ENCODE measurements at regions of chr6 and their contacts with region 1.

Region 1: DNA sequence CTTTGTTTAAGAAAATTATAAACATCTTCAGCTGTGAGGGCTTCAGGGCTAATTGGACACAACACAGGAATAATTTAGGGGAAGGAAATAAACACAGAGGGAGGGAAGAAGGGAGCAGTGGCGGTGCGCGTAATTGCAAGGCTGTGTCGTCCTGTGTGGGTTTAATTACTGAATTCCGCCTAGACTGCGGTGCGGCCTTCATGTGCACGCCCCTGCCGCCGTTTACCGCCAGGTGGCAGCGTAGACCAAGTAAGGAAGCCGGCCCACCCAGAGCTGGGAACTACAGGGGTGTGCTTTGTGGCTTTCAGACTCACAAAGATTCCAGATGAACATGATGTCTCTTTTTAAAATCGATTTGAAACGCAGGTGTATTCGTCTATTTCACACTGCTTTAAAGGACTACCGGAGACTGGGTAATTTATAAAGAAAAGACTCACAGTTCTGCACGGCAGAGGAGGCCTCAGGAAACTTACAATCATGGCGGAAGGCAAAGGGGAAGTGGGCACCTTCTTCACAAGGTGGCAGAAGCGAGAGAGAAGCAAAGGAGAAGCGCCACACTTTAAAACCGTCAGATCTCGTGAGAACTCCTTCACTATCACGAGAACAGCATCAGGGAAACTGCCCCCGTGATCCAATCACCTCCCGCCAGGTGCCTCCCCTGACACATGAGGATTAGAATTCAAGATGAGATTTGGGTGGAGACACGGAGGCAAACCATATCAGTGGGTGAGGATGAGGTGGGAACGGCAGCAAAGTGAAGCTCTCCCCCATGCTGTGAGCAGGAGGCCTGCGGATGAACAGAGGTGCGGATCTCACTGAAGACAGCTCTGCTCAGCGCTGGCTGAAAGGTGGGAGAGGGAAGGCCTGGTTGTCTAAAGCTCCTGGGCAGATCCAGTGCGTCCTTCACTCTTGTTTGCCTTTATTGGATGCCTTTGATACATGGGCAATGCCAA is 222.0 kb upstream of the PDE10A start:
- DNase-seq: peak; percentile 81 to 89 (median 89)
- H3K4me3 ChIP-seq: peak overlapping the region in 2 of 7 experiments; percentile 2 to 43
- H3K27ac ChIP-seq: no peak overlapping the region
- H3K4me1 ChIP-seq: peaks cover 0 to 4% (median 0%) of the 10 kb centered on the region in 4 experiments
- H3K27me3 ChIP-seq: peaks cover 0 to 15% (median 3%) of the 10 kb centered on the region in 5 experiments

Region 2: GRCh38 chr6:165872311-165872710 is 12.8 kb before region 1 on chr6:
- CTCF ChIA-PET with region 1: no interaction called
- POLR2A ChIA-PET with region 1: no interaction called
- DNase-seq: no peak
- H3K4me3 ChIP-seq: no peak overlapping the region
- H3K27ac ChIP-seq: no peak overlapping the region
- H3K4me1 ChIP-seq: no peaks in the 10 kb centered on the region
- H3K27me3 ChIP-seq: peaks cover 11 to 51% (median 17%) of the 10 kb centered on the region in 5 experiments

Region 3: DNA sequence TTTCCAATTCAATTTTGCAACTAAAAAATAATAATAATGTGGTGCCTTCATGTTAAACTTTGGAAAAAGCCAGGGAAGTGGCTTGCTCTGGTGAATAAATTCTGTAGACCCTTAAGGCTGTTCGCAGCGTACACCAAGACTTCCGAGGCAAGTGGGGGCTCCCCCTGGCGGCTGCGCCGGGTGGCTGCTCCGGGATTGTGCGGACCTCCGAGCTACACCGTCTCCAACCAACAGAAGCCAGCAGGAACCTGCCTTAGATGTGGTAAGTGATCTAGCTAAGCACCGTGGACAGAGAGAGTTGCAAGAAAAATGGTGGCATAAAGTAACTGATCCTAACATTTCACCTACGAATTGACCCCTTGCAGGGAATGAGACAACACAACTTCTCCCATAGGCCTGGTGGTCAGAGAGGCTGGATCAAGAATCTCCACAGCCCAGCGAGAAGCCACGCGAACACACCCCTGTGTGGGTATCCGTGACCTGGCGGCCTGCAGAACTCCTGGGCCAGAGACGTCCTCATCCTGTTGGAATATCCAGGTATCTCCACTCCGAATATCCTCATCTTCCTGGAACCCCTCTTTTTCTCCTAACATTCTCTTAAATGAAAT is 212.9 kb after region 1 on chr6:
- CTCF ChIA-PET with region 1: interaction called, 21 read pairs
- POLR2A ChIA-PET with region 1: no interaction called
- DNase-seq: peak; percentile 69 to 86 (median 84)
- H3K4me3 ChIP-seq: peak overlapping the region in 2 of 7 experiments; percentile 29 to 47
- H3K27ac ChIP-seq: no peak overlapping the region
- H3K4me1 ChIP-seq: no peaks in the 10 kb centered on the region
- H3K27me3 ChIP-seq: peaks cover 1 to 36% (median 4%) of the 10 kb centered on the region in 5 experiments

Region 4: GRCh38 chr6:166106076-166106686 is 221.1 kb after region 1 on chr6:
- CTCF ChIA-PET with region 1: interaction called, 46 read pairs
- POLR2A ChIA-PET with region 1: interaction called, 3 read pairs
- DNase-seq: peak; percentile 64 to 77 (median 75)
- H3K4me3 ChIP-seq: peak overlapping the region in 1 of 7 experiments; percentile 10
- H3K27ac ChIP-seq: no peak overlapping the region
- H3K4me1 ChIP-seq: peaks cover 0 to 5% (median 2%) of the 10 kb centered on the region in 4 experiments
- H3K27me3 ChIP-seq: peaks cover 4 to 13% (median 8%) of the 10 kb centered on the region in 5 experiments

Measured in common myeloid progenitor, CD34-positive (primary cell).